Activated naive CD4-positive, alpha-beta T cell treated with anti-CD3 and anti-CD28 coated beads for 36 hours (primary cell): ENCODE measurements at regions of chr4 and their contacts with region 1.

Region 1: DNA sequence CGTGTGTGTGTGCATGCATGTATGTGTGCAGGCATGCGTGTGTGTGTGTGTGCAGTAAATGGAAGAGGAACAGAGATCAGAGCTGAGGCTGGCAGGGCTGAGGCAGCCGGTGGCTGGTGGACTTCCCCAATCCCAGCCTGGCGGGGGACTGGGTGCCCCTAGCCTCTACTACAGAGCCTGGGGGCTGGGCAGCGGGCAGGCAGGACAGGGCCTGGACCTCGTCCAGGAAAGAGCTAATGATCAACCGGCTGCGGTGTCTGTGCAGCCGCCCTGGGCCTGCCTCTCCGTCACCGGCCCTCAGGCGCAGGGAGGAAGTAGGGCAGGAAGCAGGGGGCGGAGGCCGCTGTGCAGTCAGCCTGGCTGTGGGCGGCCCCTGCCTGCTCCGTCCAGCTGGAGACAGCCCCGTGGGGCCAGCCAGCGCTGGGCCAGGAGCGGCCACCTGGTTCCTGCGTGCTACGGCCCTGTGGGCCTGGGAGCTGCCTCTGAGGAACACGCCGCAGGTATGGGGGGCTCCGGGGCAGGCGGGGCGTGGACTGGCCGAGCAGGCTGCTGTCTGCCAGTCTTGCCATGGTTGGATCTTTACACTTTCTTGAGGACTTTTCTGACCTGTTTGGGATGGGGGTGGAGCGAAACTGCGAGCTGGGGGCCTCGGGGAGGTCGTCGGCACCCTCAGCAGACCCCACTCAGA is at the start of gene SH3TC1:
- DNase-seq: peak; percentile 73
- H3K4me3 Mint-ChIP-seq: peak within 1 kb of the TSS; percentile 84
- H3K27ac Mint-ChIP-seq: peak within 1 kb of the TSS; percentile 80
- H3K4me1 Mint-ChIP-seq: peaks cover 36% of the 10 kb centered on the region
- H3K27me3 Mint-ChIP-seq: no peaks in the 10 kb centered on the region
- total RNA-seq, gene SH3TC1: 17.9 to 23.6 TPM

Region 2: GRCh38 chr4:8158710-8159536 is 40.1 kb before region 1 on chr4 and contains the start of gene ABLIM2:
- CTCF ChIA-PET with region 1: no interaction called
- intact Hi-C with region 1: loop called (anchors 1 kb)
- DNase-seq: peak; percentile 97
- H3K4me3 Mint-ChIP-seq: peak within 1 kb of the TSS; percentile 89
- H3K27ac Mint-ChIP-seq: no peak within 1 kb of the TSS
- H3K4me1 Mint-ChIP-seq: peaks cover 11% of the 10 kb centered on the region
- H3K27me3 Mint-ChIP-seq: peaks cover 4% of the 10 kb centered on the region
- total RNA-seq, gene ABLIM2: 0.22 to 0.24 TPM

Region 3: DNA sequence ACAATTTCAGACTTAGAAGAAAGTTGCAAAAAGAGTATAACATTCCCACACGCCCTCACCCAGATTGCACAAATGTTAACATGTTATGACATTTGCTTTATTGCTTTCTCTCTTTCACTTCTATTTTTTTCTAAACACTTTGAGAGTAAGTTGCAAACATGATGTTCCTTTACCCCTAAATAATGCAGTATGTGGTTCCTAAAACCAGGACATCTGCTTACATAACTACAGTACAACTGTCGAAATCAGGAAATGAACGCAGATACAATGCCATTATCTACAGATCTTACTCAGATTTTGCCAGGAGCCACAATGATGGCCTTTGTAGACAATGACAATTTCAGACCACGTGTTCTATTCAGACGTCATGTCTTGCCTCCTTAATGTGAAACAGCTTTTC is 22.4 kb after region 1 on chr4:
- CTCF ChIA-PET with region 1: interaction called, 3 read pairs
- intact Hi-C with region 1: loop called (anchors 1 kb)
- DNase-seq: peak; percentile 30
- H3K4me3 Mint-ChIP-seq: no peak overlapping the region
- H3K27ac Mint-ChIP-seq: peak overlapping the region; percentile 27
- H3K4me1 Mint-ChIP-seq: peaks cover 25% of the 10 kb centered on the region
- H3K27me3 Mint-ChIP-seq: no peaks in the 10 kb centered on the region

Region 4: GRCh38 chr4:8228319-8229250 is 29.5 kb after region 1 on chr4:
- CTCF ChIA-PET with region 1: no interaction called
- intact Hi-C with region 1: loop called (anchors 1 kb)
- DNase-seq: peak; percentile 96
- H3K4me3 Mint-ChIP-seq: no peak overlapping the region
- H3K27ac Mint-ChIP-seq: no peak overlapping the region
- H3K4me1 Mint-ChIP-seq: peaks cover 23% of the 10 kb centered on the region
- H3K27me3 Mint-ChIP-seq: no peaks in the 10 kb centered on the region